ENCODE measurements at regions of chr11 and their contacts with region 1.

Region 1: DNA sequence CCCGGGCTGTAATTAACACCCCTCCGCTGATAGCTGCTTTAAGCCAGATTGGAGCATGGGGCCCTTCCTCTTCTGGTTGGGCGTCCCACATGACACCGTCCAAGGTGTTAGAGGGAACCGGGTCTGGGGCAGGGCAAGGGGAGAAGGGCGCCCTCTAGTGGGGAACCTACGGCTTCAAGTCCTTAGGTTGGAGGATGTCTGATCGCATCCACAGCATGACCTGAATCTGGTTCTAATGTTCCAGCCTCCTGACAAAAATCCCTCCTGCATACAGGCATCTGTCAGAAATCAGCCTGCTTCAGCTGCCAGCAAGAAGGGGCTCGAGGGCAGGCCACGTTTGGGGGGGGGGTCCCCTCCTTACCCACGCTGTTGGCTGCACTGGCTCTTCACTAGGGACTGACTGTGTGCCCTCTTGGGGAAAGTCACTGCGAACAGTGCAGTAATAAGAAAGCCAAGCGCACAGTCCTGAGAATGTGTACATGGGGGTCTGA is 94.2 kb upstream of the TBCEL start:
- DNase-seq: peak; percentile 72 to 83 (median 81)
- H3K4me3 ChIP-seq: no peak overlapping the region
- H3K27ac ChIP-seq: no peak overlapping the region
- H3K4me1 ChIP-seq: no peaks in the 10 kb centered on the region
- H3K27me3 ChIP-seq: peaks cover 0 to 2% (median 0%) of the 10 kb centered on the region in 5 experiments

Region 2: GRCh38 chr11:120869516-120870011 is 60.1 kb before region 1 on chr11:
- CTCF ChIA-PET with region 1: no interaction called
- POLR2A ChIA-PET with region 1: no interaction called
- DNase-seq: peak in 2 of 3 donors; percentile 7 to 10
- H3K4me3 ChIP-seq: no peak overlapping the region
- H3K27ac ChIP-seq: no peak overlapping the region
- H3K4me1 ChIP-seq: no peaks in the 10 kb centered on the region
- H3K27me3 ChIP-seq: peaks cover 0 to 58% (median 6%) of the 10 kb centered on the region in 5 experiments

Region 3: GRCh38 chr11:120912504-120912903 is 17.2 kb before region 1 on chr11:
- CTCF ChIA-PET with region 1: interaction called, 10 read pairs
- POLR2A ChIA-PET with region 1: no interaction called
- DNase-seq: peak; percentile 29 to 54 (median 51)
- H3K4me3 ChIP-seq: no peak overlapping the region
- H3K27ac ChIP-seq: no peak overlapping the region
- H3K4me1 ChIP-seq: no peaks in the 10 kb centered on the region
- H3K27me3 ChIP-seq: peaks cover 0 to 12% (median 3%) of the 10 kb centered on the region in 5 experiments

Region 4: GRCh38 chr11:121023848-121024751 is 94.4 kb after region 1 on chr11 and contains the start of gene TBCEL:
- CTCF ChIA-PET with region 1: no interaction called
- POLR2A ChIA-PET with region 1: no interaction called
- DNase-seq: peak; percentile 85 to 91 (median 89)
- H3K4me3 ChIP-seq: peak within 1 kb of the TSS; percentile 35 to 82 (median 70)
- H3K27ac ChIP-seq: peak within 1 kb of the TSS; percentile 64 to 82
- H3K4me1 ChIP-seq: peaks cover 7 to 19% (median 14%) of the 10 kb centered on the region in 4 experiments
- H3K27me3 ChIP-seq: peaks cover 0 to 3% (median 0%) of the 10 kb centered on the region in 5 experiments

Measured in common myeloid progenitor, CD34-positive (primary cell).